Mammary epithelial cell (primary cell): ENCODE measurements at regions of chr11 and their contacts with region 1.

Region 1: GRCh38 chr11:95835768-95836488 is 45.6 kb downstream of the CEP57 start:
- DNase-seq: peak; percentile 81
- H3K4me3 ChIP-seq: no peak overlapping the region
- H3K27ac ChIP-seq: peak overlapping the region; percentile 14
- H3K4me1 ChIP-seq: no peaks in the 10 kb centered on the region
- H3K27me3 ChIP-seq: no peaks in the 10 kb centered on the region
- CTCF ChIP-seq: peak; percentile 93 to 98

Region 2: GRCh38 chr11:95877291-95877690 is 41.4 kb after region 1 on chr11:
- CTCF ChIA-PET with region 1: no interaction called
- dilution Hi-C with region 1: no loop called
- in situ Hi-C with region 1: no loop called
- intact Hi-C with region 1: no loop called
- DNase-seq: peak; percentile 96
- H3K4me3 ChIP-seq: no peak overlapping the region
- H3K27ac ChIP-seq: peak overlapping the region; percentile 60
- H3K4me1 ChIP-seq: peaks cover 15% of the 10 kb centered on the region
- H3K27me3 ChIP-seq: no peaks in the 10 kb centered on the region
- CTCF ChIP-seq: no peak

Region 3: DNA sequence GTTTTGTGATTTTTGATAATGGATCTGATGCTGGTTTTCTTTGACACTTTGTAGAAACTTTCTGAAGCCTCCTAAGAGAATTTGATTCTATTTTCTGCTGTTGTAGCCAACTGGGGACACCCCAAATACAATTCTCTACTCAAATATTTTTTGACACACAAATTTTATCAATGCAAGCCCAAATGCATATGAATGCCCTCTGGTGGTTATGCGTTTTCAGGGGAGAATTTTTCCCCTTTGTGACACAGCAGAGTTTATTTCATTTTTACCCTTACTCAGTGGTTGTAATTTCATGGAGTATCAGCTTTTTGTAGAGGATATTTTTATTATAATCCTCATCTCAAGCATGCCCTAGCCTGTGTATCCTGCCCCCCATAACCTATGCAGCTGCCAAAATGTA is 132.7 kb after region 1 on chr11:
- CTCF ChIA-PET with region 1: no interaction called
- dilution Hi-C with region 1: no loop called
- in situ Hi-C with region 1: no loop called
- intact Hi-C with region 1: loop called (anchors 1 kb)
- DNase-seq: no peak
- H3K4me3 ChIP-seq: no peak overlapping the region
- H3K27ac ChIP-seq: no peak overlapping the region
- H3K4me1 ChIP-seq: no peaks in the 10 kb centered on the region
- H3K27me3 ChIP-seq: no peaks in the 10 kb centered on the region
- CTCF ChIP-seq: peak; percentile 5 to 34

Region 4: GRCh38 chr11:96045622-96046456 is 209.9 kb after region 1 on chr11:
- CTCF ChIA-PET with region 1: interaction called, 4 read pairs
- dilution Hi-C with region 1: no loop called
- in situ Hi-C with region 1: loop called in 1 of 2 experiments (anchors 25 kb)
- intact Hi-C with region 1: loop called (anchors 5 kb)
- DNase-seq: no peak
- H3K4me3 ChIP-seq: no peak overlapping the region
- H3K27ac ChIP-seq: no peak overlapping the region
- H3K4me1 ChIP-seq: no peaks in the 10 kb centered on the region
- H3K27me3 ChIP-seq: no peaks in the 10 kb centered on the region
- CTCF ChIP-seq: peak; percentile 21 to 47

Region 5: DNA sequence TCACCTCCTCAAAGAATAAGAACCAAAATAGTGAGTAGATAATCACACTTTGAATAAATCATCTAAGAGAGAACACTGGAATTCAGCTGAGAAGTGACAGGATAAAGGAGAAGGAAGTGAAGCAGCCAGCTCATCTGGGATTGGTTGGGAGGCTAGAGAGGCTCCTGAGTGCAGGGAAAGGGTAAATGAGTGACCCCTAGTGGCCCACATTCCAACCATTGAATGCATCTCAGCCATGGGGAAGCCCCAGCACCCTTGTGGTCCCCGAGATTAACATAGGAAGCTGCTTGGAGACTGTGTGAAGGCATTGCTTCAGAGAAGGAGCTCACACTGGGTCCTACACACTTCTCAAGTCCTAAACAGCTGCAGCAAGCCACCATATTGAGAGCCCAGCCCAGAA is 636.2 kb after region 1 on chr11:
- CTCF ChIA-PET with region 1: no interaction called
- dilution Hi-C with region 1: no loop called
- in situ Hi-C with region 1: no loop called
- intact Hi-C with region 1: no loop called
- DNase-seq: no peak
- H3K4me3 ChIP-seq: no peak overlapping the region
- H3K27ac ChIP-seq: no peak overlapping the region
- H3K4me1 ChIP-seq: no peaks in the 10 kb centered on the region
- H3K27me3 ChIP-seq: no peaks in the 10 kb centered on the region
- CTCF ChIP-seq: no peak